ENCODE measurements at regions of chr2 and their contacts with region 1.

Region 1: GRCh38 chr2:223113161-223113560 is 61.2 kb downstream of the KCNE4 start:
- DNase-seq: no peak
- CTCF ChIP-seq: no peak

Region 2: GRCh38 chr2:222900354-222900753 is 212.8 kb before region 1 on chr2:
- CTCF ChIA-PET with region 1: no interaction called
- POLR2A ChIA-PET with region 1: no interaction called
- DNase-seq: no peak
- CTCF ChIP-seq: no peak

Region 3: GRCh38 chr2:223101340-223102039 is 11.7 kb before region 1 on chr2:
- CTCF ChIA-PET with region 1: interaction called, 20 read pairs
- POLR2A ChIA-PET with region 1: no interaction called
- DNase-seq: peak; percentile 24
- CTCF ChIP-seq: peak; percentile 16

Measured in GM10248 (cell line).